HAP-1 (cell line): ENCODE measurements at regions of chr15 and their contacts with region 1.

Region 1: GRCh38 chr15:50686468-50687301 is at the start of gene TRPM7:
- DNase-seq: peak; percentile 81 to 91
- H3K4me3 ChIP-seq: peak within 1 kb of the TSS; percentile 86
- H3K4me1 ChIP-seq: peaks cover 19% of the 10 kb centered on the region
- H3K27me3 ChIP-seq: no peaks in the 10 kb centered on the region

Region 2: GRCh38 chr15:50908210-50909009 is 221.7 kb after region 1 on chr15 and contains the start of gene AP4E1:
- in situ Hi-C with region 1: loop called (anchors 10 kb)
- DNase-seq: peak; percentile 91 to 94
- H3K4me3 ChIP-seq: peak within 1 kb of the TSS; percentile 96
- H3K4me1 ChIP-seq: peaks cover 19% of the 10 kb centered on the region
- H3K27me3 ChIP-seq: no peaks in the 10 kb centered on the region